T-cell (primary cell): ENCODE measurements at regions of chr14 and their contacts with region 1.

Region 1: DNA sequence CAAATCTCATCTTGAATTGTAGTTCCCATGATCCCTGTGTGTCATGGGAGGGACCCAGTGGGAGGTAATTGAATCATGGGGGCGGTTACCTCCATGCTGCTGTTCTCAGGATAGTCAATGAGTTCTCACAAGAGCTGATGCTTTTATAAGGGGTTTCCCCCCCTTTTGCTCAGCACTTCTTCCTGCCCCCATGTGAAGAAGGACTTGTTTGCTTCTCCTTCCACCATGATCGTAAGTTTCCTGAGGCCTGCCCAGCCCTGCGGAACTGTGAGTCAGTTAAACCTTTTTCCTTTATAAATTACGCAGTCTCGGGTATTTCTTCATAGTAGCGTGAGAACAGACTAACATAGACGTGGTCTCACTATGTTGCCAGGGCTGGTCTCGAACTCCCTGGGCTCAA is 56.1 kb upstream of the EIF5 start:
- DNase-seq: no peak
- ATAC-seq: no peak
- H3K4me3 ChIP-seq: no peak overlapping the region
- H3K4me3 Mint-ChIP-seq: no peak overlapping the region
- H3K27ac ChIP-seq: no peak overlapping the region
- H3K27ac Mint-ChIP-seq: no peak overlapping the region
- H3K4me1 ChIP-seq: peaks cover 0 to 6% of the 10 kb centered on the region in 2 experiments
- H3K4me1 Mint-ChIP-seq: peaks cover 0 to 12% (median 6%) of the 10 kb centered on the region in 3 donors
- H3K27me3 ChIP-seq: peaks cover 11 to 59% of the 10 kb centered on the region in 2 experiments
- H3K27me3 Mint-ChIP-seq: peaks cover 35 to 66% of the 10 kb centered on the region in 2 donors

Region 2: GRCh38 chr14:103370087-103370486 is 92.2 kb after region 1 on chr14:
- CTCF ChIA-PET with region 1: no interaction called
- POLR2A ChIA-PET with region 1: interaction called in 1 of 2 experiments, 14 read pairs
- DNase-seq: no peak
- ATAC-seq: no peak
- H3K4me3 ChIP-seq: no peak overlapping the region
- H3K4me3 Mint-ChIP-seq: no peak overlapping the region
- H3K27ac ChIP-seq: no peak overlapping the region
- H3K27ac Mint-ChIP-seq: no peak overlapping the region
- H3K4me1 ChIP-seq: no peaks in the 10 kb centered on the region
- H3K4me1 Mint-ChIP-seq: no peaks in the 10 kb centered on the region
- H3K27me3 ChIP-seq: peaks cover 0 to 7% of the 10 kb centered on the region in 2 experiments
- H3K27me3 Mint-ChIP-seq: peaks cover 4 to 10% of the 10 kb centered on the region in 2 donors